ENCODE measurements at regions of chr14 and their contacts with region 1.

Region 1: DNA sequence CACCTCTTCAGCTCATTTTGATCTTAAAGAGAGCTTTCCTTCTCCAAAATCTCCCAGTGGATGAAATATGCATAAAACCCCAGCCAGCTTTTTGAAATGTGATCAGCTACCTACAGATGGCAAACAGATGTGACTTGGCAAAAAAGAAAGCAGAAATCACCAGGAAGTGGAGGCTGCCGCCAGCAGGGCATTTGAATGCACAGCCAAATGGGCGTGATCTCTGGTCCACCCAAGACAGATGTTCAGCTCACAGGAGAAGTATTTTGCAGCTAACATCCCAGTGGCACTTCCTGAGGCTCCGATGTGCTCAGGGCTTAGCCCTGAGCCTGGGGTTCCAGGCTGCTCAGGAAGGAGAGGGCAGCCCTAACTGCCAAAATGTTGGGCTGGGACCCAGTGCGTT is 78.3 kb downstream of the LGMN start:
- DNase-seq: no peak
- H3K4me3 Mint-ChIP-seq: no peak overlapping the region
- H3K27ac Mint-ChIP-seq: peak overlapping the region; percentile 60
- H3K4me1 Mint-ChIP-seq: peaks cover 71% of the 10 kb centered on the region
- H3K27me3 Mint-ChIP-seq: no peaks in the 10 kb centered on the region

Region 2: GRCh38 chr14:92651106-92651757 is 18.9 kb before region 1 on chr14:
- CTCF ChIA-PET with region 1: interaction called, 9 read pairs
- POLR2A ChIA-PET with region 1: interaction called, 8 read pairs
- intact Hi-C with region 1: loop called (anchors 1 kb)
- DNase-seq: peak; percentile 90
- H3K4me3 Mint-ChIP-seq: peak overlapping the region; percentile 93
- H3K27ac Mint-ChIP-seq: peak overlapping the region; percentile 97
- H3K4me1 Mint-ChIP-seq: peaks cover 77% of the 10 kb centered on the region
- H3K27me3 Mint-ChIP-seq: no peaks in the 10 kb centered on the region

Measured in activated CD4-positive, alpha-beta memory T cell treated with anti-CD3 and anti-CD28 coated beads for 36 hours (primary cell).